Caco-2 (cell line): ENCODE measurements at regions of chr6 and their contacts with region 1.

Region 1: GRCh38 chr6:41683510-41684310 is 45.4 kb downstream of the MDFI start:
- DNase-seq: peak; percentile 65 to 83
- H3K4me3 ChIP-seq: no peak overlapping the region
- H3K4me3 Mint-ChIP-seq: peak overlapping the region; percentile 45
- H3K27ac Mint-ChIP-seq: no peak overlapping the region
- H3K4me1 ChIP-seq: peaks cover 7% of the 10 kb centered on the region; the same call in 1 of the 2 replicates
- H3K4me1 Mint-ChIP-seq: no peaks in the 10 kb centered on the region
- H3K27me3 ChIP-seq: no peaks in the 10 kb centered on the region
- H3K27me3 Mint-ChIP-seq: no peaks in the 10 kb centered on the region
- CTCF ChIP-seq: peak; percentile 85 to 89

Region 2: DNA sequence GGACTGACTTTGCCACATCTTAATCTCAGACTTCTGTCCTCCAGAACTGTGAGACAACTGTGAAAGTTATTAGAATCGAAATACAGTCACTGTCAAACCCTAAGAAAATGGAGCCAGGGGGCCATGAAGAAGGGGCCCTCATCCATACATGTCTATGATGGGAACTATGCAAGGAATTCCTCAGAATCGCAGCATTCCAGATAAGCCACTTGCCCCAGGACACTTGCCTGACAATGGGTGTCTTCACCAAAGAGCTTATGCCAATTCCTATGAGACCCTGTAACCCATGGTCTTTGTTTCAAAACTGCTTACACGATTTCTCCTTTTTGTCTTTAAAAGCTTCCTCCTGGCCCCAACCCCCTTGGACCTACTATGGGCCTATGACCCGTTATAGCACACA is 227.9 kb before region 1 on chr6:
- CTCF ChIA-PET with region 1: interaction called, 4 read pairs
- POLR2A ChIA-PET with region 1: no interaction called
- intact Hi-C with region 1: loop called (anchors 2 kb)
- DNase-seq: peak; percentile 40 to 68
- H3K4me3 ChIP-seq: no peak overlapping the region
- H3K4me3 Mint-ChIP-seq: peak overlapping the region; percentile 52
- H3K27ac Mint-ChIP-seq: peak overlapping the region; percentile 96
- H3K4me1 ChIP-seq: peaks cover 60% of the 10 kb centered on the region
- H3K4me1 Mint-ChIP-seq: peaks cover 37% of the 10 kb centered on the region
- H3K27me3 ChIP-seq: no peaks in the 10 kb centered on the region
- H3K27me3 Mint-ChIP-seq: no peaks in the 10 kb centered on the region
- CTCF ChIP-seq: no peak

Region 3: DNA sequence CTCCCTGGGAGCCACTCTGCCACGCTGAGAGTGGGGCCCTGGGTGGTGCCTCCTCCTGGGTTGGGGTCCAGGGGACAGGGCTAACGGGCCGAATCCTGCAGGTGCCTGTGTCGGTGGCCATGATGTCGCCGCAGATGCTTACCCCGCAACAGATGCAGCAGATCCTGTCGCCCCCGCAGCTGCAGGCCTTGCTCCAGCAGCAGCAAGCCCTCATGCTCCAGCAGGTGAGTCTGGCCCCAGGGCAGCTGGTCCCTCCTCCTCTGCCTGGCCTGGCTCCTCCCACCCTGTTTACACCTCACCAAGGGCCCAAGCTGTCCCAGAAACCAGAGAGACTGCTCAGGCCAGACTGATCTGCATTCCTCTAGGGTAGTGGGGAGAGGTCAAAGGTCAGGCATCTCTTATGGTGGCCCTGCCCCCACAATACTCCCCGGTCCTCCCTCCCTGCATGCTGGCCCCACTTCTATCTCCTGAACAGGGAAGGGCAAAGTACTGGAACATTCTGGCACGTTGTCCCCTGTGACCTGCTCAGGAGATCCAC is 99.0 kb before region 1 on chr6:
- CTCF ChIA-PET with region 1: no interaction called
- POLR2A ChIA-PET with region 1: no interaction called
- intact Hi-C with region 1: no loop called
- DNase-seq: peak; percentile 88 to 91
- H3K4me3 ChIP-seq: no peak overlapping the region
- H3K4me3 Mint-ChIP-seq: peak overlapping the region; percentile 9
- H3K27ac Mint-ChIP-seq: peak overlapping the region; percentile 11
- H3K4me1 ChIP-seq: peaks cover 54% of the 10 kb centered on the region
- H3K4me1 Mint-ChIP-seq: peaks cover 28% of the 10 kb centered on the region
- H3K27me3 ChIP-seq: no peaks in the 10 kb centered on the region
- H3K27me3 Mint-ChIP-seq: no peaks in the 10 kb centered on the region
- CTCF ChIP-seq: no peak

Region 4: GRCh38 chr6:41602864-41603608 is 80.7 kb before region 1 on chr6:
- CTCF ChIA-PET with region 1: interaction called, 45 read pairs
- POLR2A ChIA-PET with region 1: no interaction called
- intact Hi-C with region 1: loop called (anchors 1 kb)
- DNase-seq: peak; percentile 87 to 88
- H3K4me3 ChIP-seq: no peak overlapping the region
- H3K4me3 Mint-ChIP-seq: peak overlapping the region; percentile 69
- H3K27ac Mint-ChIP-seq: peak overlapping the region; percentile 73
- H3K4me1 ChIP-seq: no peaks in the 10 kb centered on the region
- H3K4me1 Mint-ChIP-seq: peaks cover 19% of the 10 kb centered on the region
- H3K27me3 ChIP-seq: no peaks in the 10 kb centered on the region
- H3K27me3 Mint-ChIP-seq: no peaks in the 10 kb centered on the region
- CTCF ChIP-seq: peak; percentile 80 to 93

Region 5: DNA sequence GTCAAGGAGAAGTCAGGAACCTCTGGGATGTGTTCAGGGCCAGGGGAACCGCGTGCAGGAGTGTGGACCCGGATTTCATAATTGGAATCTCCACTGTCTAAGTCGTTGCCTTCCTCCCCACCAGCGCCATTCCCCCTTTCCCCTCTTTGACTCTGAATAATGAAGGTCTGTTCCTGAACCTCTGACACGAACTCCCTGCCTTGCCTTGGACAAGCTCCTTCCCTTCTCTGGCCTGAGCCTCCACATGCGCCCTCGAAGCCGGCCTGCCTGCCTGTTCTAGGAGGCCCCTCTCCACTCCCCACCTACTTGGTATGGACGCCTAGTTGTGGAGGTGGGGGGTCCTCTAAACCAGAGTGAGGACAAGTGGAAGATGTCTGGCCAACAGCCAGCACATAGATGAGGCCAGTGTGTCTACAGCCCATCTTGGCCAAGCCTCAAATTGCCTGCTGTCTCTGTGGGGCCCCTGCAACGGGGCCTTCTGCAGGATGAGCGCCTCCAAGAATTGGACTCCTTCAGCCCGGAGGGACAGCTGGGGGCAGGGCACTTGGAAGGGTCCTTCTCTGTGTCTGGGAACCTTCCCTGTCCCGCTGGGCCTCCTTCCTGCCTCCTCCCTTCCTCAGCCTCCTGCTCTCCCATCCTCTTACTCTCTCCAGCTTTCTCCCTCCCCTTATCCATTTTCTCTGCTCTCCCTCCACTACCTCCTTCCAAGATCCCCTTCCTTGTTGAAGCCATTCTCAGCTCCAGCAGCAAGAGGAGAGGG is 43.9 kb before region 1 on chr6:
- CTCF ChIA-PET with region 1: interaction called, 3 read pairs
- POLR2A ChIA-PET with region 1: no interaction called
- intact Hi-C with region 1: loop called (anchors 5 kb)
- DNase-seq: no peak
- H3K4me3 ChIP-seq: no peak overlapping the region
- H3K4me3 Mint-ChIP-seq: no peak overlapping the region
- H3K27ac Mint-ChIP-seq: no peak overlapping the region
- H3K4me1 ChIP-seq: peaks cover 7% of the 10 kb centered on the region
- H3K4me1 Mint-ChIP-seq: peaks cover 6% of the 10 kb centered on the region
- H3K27me3 ChIP-seq: no peaks in the 10 kb centered on the region
- H3K27me3 Mint-ChIP-seq: no peaks in the 10 kb centered on the region
- CTCF ChIP-seq: no peak